Caco-2 (cell line): ENCODE measurements at regions of chr16 and their contacts with region 1.

Region 1: DNA sequence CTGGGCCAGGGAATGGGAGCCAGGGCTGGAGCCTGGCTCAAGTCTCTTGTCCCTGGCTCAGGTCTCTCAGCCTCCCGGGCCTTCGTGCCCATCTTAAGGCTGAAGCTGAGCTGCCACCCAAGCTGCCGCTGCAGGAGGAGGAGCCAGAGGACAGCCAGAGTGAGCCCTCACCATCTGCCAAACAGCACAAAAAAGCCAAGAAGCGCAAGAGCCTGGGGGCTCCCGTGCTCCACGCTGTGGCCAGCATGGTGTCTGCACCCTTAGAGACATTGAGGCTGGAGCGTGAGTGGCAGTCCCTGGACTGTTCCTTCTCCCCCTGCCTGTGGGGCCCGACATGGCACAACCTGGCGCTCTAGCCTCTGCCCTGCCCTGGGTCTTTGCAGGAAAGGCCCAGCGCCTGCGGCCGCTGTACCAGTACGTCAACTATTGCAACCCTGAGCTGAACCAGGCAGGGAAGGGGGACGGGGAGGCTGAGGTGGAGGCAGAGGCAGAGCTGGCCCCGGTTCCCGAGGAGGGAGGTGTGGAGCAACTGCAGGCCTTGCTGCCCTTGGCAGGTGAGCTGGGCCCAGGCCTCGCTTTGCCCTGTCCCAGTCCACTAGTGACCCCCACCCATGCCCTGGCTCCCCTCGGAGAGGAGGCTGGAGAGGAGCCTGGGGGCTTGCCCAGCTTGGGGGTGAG is 1.3 kb downstream of the C16orf86 start:
- DNase-seq: peak; percentile 88
- H3K4me3 ChIP-seq: no peak overlapping the region
- H3K4me3 Mint-ChIP-seq: peak overlapping the region; percentile 26
- H3K27ac Mint-ChIP-seq: no peak overlapping the region
- H3K4me1 ChIP-seq: peaks cover 4% of the 10 kb centered on the region
- H3K4me1 Mint-ChIP-seq: no peaks in the 10 kb centered on the region
- H3K27me3 ChIP-seq: no peaks in the 10 kb centered on the region
- H3K27me3 Mint-ChIP-seq: no peaks in the 10 kb centered on the region
- CTCF ChIP-seq: peak; percentile 72 to 95

Region 2: DNA sequence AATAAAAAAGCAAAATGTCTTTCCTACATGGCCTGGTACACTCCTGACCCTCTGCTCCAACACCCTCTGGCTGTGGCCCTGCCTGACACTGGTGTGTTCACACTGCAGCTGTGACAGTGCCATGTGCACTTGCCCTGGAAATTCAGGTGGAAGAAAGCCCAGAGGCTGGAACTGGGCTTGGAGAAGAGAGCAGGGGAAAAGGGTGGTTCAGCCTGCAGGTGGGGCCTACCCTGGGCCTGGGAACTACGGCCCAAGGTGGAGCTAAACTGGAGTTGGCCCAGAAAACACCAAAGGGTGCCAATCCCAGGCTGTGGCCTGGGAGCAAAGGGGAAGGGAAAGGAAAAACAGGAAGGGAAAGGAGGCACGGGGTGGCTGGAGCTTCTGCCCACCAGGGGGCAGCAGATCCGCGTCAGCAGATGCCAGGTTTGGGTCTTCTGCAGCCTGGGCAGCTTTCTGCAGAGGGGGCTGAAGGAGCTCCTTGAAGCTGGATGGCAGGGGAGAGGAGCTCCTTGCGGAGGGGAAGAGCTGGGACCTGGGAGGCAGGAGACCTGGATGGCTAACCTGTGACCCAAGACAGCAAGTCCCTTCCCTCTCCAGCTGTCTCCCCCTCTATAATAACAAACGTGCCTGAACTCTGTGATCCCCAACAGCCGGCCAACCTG is 121.1 kb before region 1 on chr16:
- CTCF ChIA-PET with region 1: no interaction called
- POLR2A ChIA-PET with region 1: no interaction called
- intact Hi-C with region 1: loop called (anchors 1 kb)
- DNase-seq: peak; percentile 78 to 90
- H3K4me3 ChIP-seq: no peak overlapping the region
- H3K4me3 Mint-ChIP-seq: no peak overlapping the region
- H3K27ac Mint-ChIP-seq: peak overlapping the region; percentile 68
- H3K4me1 ChIP-seq: no peaks in the 10 kb centered on the region
- H3K4me1 Mint-ChIP-seq: peaks cover 5% of the 10 kb centered on the region
- H3K27me3 ChIP-seq: no peaks in the 10 kb centered on the region; the same call in 1 of the 2 replicates
- H3K27me3 Mint-ChIP-seq: no peaks in the 10 kb centered on the region
- CTCF ChIP-seq: peak; percentile 95 to 98

Region 3: GRCh38 chr16:67773099-67773498 is 105.1 kb after region 1 on chr16:
- CTCF ChIA-PET with region 1: no interaction called
- POLR2A ChIA-PET with region 1: no interaction called
- intact Hi-C with region 1: no loop called
- DNase-seq: no peak
- H3K4me3 ChIP-seq: no peak overlapping the region
- H3K4me3 Mint-ChIP-seq: no peak overlapping the region
- H3K27ac Mint-ChIP-seq: no peak overlapping the region
- H3K4me1 ChIP-seq: no peaks in the 10 kb centered on the region
- H3K4me1 Mint-ChIP-seq: peaks cover 10% of the 10 kb centered on the region
- H3K27me3 ChIP-seq: no peaks in the 10 kb centered on the region
- H3K27me3 Mint-ChIP-seq: no peaks in the 10 kb centered on the region
- CTCF ChIP-seq: no peak

Region 4: DNA sequence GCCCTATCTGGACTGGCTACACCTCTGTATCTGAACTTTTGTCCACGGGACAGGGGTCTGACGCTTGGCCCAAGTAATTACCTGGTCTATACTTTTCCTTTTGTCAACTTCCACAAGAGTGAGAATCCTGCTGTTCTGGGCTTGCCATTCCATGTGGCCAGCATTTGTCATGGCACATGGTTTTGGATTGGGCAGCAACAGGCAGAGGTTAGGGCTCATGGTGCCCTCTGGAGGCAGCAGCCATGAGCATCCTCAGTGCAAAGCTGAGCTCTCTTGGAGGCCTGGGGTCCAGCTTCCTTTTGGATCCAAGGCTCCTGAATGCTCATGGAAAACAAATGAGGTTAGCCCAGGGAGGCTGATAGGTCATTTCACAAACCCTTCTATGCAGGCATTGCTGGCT is 197.4 kb after region 1 on chr16:
- CTCF ChIA-PET with region 1: interaction called, 11 read pairs
- POLR2A ChIA-PET with region 1: interaction called, 3 read pairs
- intact Hi-C with region 1: no loop called
- DNase-seq: peak; percentile 59 to 72
- H3K4me3 ChIP-seq: no peak overlapping the region
- H3K4me3 Mint-ChIP-seq: no peak overlapping the region
- H3K27ac Mint-ChIP-seq: no peak overlapping the region
- H3K4me1 ChIP-seq: no peaks in the 10 kb centered on the region
- H3K4me1 Mint-ChIP-seq: no peaks in the 10 kb centered on the region
- H3K27me3 ChIP-seq: no peaks in the 10 kb centered on the region
- H3K27me3 Mint-ChIP-seq: no peaks in the 10 kb centered on the region
- CTCF ChIP-seq: peak; percentile 57 to 83